ENCODE measurements at regions of chr15 and their contacts with region 1.

Region 1: GRCh38 chr15:34650177-34650576 is 66.7 kb upstream of the GOLGA8B start:
- DNase-seq: no peak
- ATAC-seq: no peak
- H3K4me3 ChIP-seq: no peak overlapping the region
- H3K4me3 Mint-ChIP-seq: no peak overlapping the region
- H3K27ac ChIP-seq: no peak overlapping the region
- H3K27ac Mint-ChIP-seq: no peak overlapping the region
- H3K4me1 ChIP-seq: no peaks in the 10 kb centered on the region
- H3K4me1 Mint-ChIP-seq: no peaks in the 10 kb centered on the region
- H3K27me3 ChIP-seq: no peaks in the 10 kb centered on the region
- H3K27me3 Mint-ChIP-seq: peaks cover 14% of the 10 kb centered on the region
- CTCF ChIP-seq: no peak

Region 2: DNA sequence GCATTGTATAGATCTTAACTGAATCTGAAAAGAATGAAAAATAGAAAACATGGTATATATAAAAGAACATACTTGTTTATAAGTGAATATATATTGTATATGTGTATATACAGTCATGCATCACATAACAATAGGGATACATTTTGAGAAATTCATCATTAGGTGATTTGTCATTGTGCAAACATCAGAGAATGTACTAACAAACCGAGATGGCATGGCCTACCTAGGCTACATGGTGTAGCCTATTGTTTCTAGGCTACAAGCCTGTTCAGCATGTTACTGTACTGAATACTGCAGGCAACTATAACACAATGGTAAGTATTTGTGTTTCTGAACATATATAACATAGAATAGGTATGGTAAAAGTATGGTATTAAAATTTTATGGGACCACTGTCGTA is 746.5 kb before region 1 on chr15:
- CTCF ChIA-PET with region 1: no interaction called
- POLR2A ChIA-PET with region 1: no interaction called
- intact Hi-C with region 1: no loop called
- DNase-seq: no peak
- ATAC-seq: no peak
- H3K4me3 ChIP-seq: no peak overlapping the region
- H3K4me3 Mint-ChIP-seq: no peak overlapping the region
- H3K27ac ChIP-seq: no peak overlapping the region
- H3K27ac Mint-ChIP-seq: no peak overlapping the region
- H3K4me1 ChIP-seq: no peaks in the 10 kb centered on the region
- H3K4me1 Mint-ChIP-seq: no peaks in the 10 kb centered on the region
- H3K27me3 ChIP-seq: no peaks in the 10 kb centered on the region
- H3K27me3 Mint-ChIP-seq: no peaks in the 10 kb centered on the region
- CTCF ChIP-seq: no peak

Region 3: DNA sequence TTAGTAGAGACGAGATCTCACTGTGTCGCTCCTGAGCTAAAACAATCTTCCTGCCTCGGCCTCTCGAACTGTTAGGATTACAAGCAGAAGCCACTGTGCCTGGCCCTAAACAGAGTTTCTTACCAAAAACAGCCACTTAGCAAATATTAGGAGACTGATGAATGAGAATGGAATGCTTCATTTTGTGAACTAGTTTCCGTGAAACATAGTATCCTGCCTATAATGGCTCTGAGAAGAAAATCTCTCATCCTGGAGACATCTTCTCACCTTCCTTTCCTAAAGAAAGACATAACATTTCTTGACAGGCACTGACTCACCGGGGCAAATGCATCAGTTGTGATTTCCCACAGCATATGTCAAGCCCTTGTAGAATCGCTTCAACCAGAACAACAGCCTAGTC is 59.7 kb after region 1 on chr15:
- CTCF ChIA-PET with region 1: no interaction called
- POLR2A ChIA-PET with region 1: no interaction called
- intact Hi-C with region 1: loop called in 1 of 2 experiments (anchors 10 kb)
- DNase-seq: no peak
- ATAC-seq: no peak
- H3K4me3 ChIP-seq: no peak overlapping the region
- H3K4me3 Mint-ChIP-seq: no peak overlapping the region
- H3K27ac ChIP-seq: no peak overlapping the region
- H3K27ac Mint-ChIP-seq: no peak overlapping the region
- H3K4me1 ChIP-seq: no peaks in the 10 kb centered on the region
- H3K4me1 Mint-ChIP-seq: no peaks in the 10 kb centered on the region
- H3K27me3 ChIP-seq: no peaks in the 10 kb centered on the region
- H3K27me3 Mint-ChIP-seq: peaks cover 21% of the 10 kb centered on the region
- CTCF ChIP-seq: no peak

Measured in CD8-positive, alpha-beta T cell (primary cell).